ENCODE measurements at regions of chr11 and their contacts with region 1.

Region 1: DNA sequence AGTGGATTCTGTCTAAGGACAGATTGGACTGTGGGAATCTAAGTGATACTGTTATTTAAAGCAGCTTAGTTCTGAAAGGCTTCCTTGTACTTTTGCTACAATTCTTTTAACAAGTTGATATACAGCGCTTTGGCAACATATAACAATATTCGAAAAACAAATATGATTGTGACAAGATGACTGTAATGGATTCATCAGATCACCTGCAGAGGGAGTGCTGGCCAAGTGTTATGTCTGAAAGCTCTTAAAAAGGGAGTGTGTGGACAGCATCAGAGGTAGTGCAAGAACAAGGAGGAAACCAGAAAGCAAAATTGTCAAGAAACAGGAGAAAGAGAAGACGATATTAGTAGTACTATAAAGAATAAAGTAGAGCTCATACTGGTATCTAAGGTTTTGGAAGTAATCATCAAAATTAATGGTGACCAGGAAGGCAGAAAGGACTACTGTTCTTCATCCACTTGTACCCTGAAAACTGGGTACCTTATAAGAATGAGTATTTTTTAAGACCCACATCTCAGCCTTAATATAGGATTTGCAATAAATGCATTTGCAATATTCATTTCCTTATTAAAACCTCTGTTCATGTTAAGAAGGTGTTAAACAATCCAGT is 1112.0 kb upstream of the CCDC90B start:
- DNase-seq: no peak
- H3K4me3 ChIP-seq: no peak overlapping the region
- CTCF ChIP-seq: peak; percentile 36

Region 2: DNA sequence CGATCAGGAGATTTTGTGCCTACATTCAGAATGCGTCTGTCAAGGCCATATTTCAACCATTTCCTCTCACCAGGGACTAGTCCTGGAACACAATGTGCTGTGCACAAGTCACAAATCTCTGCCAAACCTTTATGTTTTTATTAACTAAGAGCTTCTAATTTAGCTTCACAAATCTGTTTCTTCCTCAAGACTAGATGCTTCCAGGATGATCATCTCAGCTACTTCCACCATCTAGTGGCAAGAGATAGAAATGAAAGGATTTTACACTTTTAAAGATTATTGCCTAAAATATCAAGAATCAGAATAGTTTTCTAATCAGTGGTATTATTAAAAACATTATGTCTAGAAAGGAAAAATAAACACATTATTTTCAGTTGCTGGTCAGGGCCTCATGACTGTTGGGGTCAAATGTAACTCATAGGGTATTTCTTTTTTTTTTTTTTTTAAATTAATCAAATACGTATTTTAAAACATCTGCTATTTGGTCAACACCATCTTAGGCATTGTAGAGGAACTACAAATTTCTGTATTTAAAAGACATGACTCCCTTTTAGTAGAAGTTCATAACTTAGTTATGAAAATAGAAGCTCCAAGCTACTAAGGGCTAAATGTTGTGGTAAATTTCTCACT is 126.4 kb after region 1 on chr11:
- CTCF ChIA-PET with region 1: interaction called, 39 read pairs
- POLR2A ChIA-PET with region 1: no interaction called
- DNase-seq: no peak
- H3K4me3 ChIP-seq: no peak overlapping the region
- CTCF ChIP-seq: peak; percentile 40